Mucosa of descending colon (tissue), 3 donors: ENCODE measurements at regions of chr5 and their contacts with region 1.

Region 1: DNA sequence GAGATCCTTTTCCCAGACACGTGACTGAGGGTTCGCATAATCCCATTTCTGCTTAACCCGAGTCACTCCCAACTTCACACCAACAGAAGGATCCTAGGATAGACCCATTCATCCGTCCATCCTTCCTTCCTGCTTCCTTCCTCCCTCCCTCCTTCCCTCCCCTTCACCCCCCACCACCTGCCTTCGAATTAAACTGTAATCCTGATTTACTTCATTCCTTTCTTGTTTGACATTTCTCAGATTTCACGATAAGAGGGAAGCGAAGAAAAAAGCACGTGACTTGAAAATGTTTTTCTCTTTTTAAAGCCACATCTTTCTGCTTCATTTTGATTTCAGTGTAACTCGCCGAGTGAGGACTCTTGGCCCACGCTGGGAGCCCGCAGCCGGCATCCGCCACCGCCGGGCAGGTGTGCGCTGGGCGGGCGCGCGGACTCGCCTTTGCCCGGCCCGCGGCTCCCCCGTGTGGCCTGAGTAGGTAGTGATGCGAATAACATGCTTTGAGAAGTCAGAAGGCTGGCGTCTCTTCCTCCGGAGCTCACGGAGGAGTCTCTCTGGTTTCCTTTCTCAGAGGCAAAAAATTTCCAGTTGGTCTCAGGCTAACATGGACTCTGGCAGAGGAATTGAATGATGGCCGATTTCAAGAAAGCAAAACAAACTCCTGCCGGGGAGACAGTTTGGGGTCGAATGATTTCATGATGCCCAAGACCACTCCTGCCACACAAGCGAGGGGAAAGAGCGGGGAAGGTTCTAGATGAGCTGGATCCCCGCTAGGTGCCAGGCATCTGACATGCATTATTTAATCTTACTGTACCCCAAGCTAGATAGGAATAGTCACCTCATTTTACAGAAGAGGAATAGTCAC is 117.7 kb downstream of the SLC12A2 start:
- DNase-seq: peak; percentile 80 to 96 (median 93)
- ATAC-seq: peak; percentile 90
- H3K4me3 ChIP-seq: no peak overlapping the region
- H3K4me1 ChIP-seq: peaks cover 2% of the 10 kb centered on the region
- CTCF ChIP-seq: peak; percentile 74

Region 2: DNA sequence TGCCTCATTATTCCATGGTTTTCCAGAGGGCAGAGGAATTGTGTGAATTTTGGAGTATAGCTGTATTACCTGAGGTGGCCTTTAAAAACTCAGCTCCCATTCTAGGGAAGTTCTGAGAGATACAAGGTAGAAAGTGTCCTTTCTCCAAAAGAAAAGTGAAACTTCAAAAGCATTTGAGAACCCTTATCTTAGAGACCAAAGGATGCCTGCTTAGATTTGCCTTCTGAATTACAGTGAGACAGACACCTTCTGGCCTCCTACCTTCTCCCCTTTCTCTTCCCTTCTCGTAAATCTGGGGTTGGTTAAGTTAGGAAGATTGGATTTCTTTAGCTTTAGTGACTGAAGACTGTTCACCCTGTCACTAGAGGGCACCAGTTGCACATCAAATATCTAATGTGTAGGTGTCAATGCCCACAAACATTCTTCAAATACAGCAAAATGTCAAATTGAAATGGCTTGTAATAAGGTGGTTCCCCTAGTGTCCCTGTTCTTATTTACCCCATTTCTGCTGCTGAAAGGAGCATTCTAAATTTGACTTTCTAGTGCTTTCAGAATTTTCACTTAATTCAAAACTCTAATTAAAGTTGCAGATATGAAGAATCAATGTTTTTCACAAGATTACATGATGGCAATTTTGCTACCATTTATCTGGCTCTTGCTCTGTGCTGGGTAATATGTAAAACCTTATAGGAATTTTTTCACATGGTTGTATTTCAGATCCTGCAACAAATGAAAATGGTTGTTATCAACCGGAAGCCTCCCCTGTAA is 637.1 kb before region 1 on chr5:
- intact Hi-C with region 1: loop called in 1 of 2 experiments (anchors 5 kb)
- DNase-seq: peak in 1 of 3 donors; percentile 75
- ATAC-seq: peak; percentile 84
- H3K4me3 ChIP-seq: no peak overlapping the region
- H3K4me1 ChIP-seq: no peaks in the 10 kb centered on the region
- CTCF ChIP-seq: peak; percentile 26

Region 3: GRCh38 chr5:127746756-127747155 is 454.5 kb before region 1 on chr5:
- intact Hi-C with region 1: loop called in 1 of 2 experiments (anchors 10 kb)
- DNase-seq: no peak
- ATAC-seq: peak; percentile 44
- H3K4me3 ChIP-seq: no peak overlapping the region
- H3K4me1 ChIP-seq: no peaks in the 10 kb centered on the region
- CTCF ChIP-seq: no peak

Region 4: DNA sequence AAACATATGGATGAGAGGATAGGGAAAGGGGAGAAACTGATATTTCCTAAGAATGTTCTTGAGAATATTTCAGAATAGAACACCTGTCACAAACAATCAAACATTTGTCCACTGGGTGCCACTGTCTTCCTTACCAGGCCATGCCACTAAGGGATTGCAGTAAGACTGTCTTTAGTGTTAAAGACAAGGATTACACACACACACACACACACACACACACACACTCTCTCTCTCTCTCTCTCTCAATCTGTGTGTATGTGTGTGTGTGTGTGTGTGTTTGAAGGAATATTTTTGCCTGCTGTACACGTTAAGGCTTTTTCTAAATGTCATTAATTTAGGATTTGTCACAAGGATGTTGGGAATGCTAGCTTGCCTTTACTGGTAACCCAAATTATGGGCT is 443.7 kb before region 1 on chr5:
- intact Hi-C with region 1: loop called in 1 of 2 experiments (anchors 5 kb)
- DNase-seq: peak in 1 of 3 donors; percentile 84
- ATAC-seq: peak; percentile 78
- H3K4me3 ChIP-seq: no peak overlapping the region
- H3K4me1 ChIP-seq: peaks cover 15% of the 10 kb centered on the region
- CTCF ChIP-seq: peak; percentile 8

Region 5: DNA sequence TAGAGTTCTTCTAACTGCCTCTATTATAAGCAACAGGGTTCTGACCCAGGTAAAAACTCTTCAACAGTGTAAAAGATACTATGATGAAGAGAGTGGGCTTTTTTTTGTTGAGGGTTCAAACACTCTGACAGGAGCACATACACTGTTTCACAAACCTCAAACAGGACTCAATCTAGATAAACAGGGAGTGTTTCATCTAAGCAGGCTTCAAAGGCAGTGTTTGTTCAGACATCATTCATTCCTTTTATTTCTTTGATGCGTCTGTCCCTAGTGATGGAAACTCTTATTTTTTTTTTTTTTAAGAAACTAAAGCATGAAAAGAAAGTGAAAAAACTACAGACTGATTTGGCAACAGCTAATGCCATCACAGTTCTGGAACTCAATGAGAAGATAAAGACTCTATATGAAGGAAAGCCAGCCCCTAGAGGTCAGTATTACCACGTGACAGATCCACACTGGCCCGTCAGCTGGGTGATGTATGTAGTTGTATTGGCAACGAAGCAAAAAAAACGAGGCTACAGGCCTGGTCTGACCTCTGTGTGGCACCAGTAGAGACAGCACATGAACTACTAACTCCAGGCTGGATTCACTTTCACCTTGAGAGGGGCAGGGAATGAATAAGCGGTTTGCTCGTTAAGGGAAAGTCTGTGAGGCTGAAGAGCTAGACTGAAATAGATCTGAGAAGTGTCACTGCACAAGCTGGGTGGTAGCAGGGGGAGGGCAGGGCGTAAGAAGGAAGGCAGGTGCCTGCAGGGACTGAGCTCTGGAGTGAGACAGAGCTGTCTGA is 325.9 kb before region 1 on chr5:
- intact Hi-C with region 1: loop called in 1 of 2 experiments (anchors 5 kb)
- DNase-seq: peak in 2 of 3 donors; percentile 48 to 82
- ATAC-seq: peak; percentile 88
- H3K4me3 ChIP-seq: no peak overlapping the region
- H3K4me1 ChIP-seq: peaks cover 6% of the 10 kb centered on the region
- CTCF ChIP-seq: no peak